ENCODE measurements at regions of chr10 and their contacts with region 1.

Region 1: GRCh38 chr10:72364239-72364777 is 9.6 kb upstream of the DNAJB12 start:
- DNase-seq: peak; percentile 59
- ATAC-seq: peak; percentile 100
- H3K4me3 ChIP-seq: no peak overlapping the region
- H3K27ac ChIP-seq: 0 out of 2 replicates have a peak overlapping the region, but pooled peaks have one; percentile 29
- H3K4me1 ChIP-seq: peaks cover 3% of the 10 kb centered on the region
- H3K27me3 ChIP-seq: no peaks in the 10 kb centered on the region
- CTCF ChIP-seq: peak; percentile 94 to 96 (median 94)
- EP300 ChIP-seq: no peak
- POLR2A ChIP-seq: peak; percentile 84
- RAD21 ChIP-seq: peak; percentile 99

Region 2: DNA sequence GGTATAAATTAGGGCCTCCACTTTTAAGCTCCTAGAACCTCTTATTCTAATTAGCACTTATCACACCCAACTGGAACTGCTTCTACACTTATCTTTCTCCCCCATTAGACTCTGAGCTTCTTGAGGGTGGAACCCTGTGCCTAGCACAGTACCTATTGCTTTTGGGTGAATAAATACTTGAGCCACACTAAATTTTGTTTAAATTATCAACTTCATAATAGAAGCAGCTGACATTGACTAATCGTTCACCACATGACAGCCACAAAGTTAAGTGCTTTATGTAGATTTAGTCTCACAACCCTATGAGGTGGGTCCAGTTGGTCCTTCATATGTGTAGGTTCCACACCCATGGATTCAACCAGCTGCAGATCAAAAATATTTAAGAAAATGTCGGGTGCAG is 26.5 kb after region 1 on chr10:
- CTCF ChIA-PET with region 1: no interaction called
- POLR2A ChIA-PET with region 1: no interaction called
- RAD21 ChIA-PET with region 1: no interaction called
- SMC1A ChIA-PET with region 1: no interaction called
- in situ Hi-C with region 1: no loop called
- intact Hi-C with region 1: no loop called
- DNase-seq: no peak
- ATAC-seq: no peak
- H3K4me3 ChIP-seq: no peak overlapping the region
- H3K27ac ChIP-seq: no peak overlapping the region
- H3K4me1 ChIP-seq: no peaks in the 10 kb centered on the region
- H3K27me3 ChIP-seq: no peaks in the 10 kb centered on the region
- CTCF ChIP-seq: no peak
- EP300 ChIP-seq: no peak
- POLR2A ChIP-seq: no peak
- RAD21 ChIP-seq: no peak

Region 3: GRCh38 chr10:72567884-72568640 is 203.8 kb after region 1 on chr10:
- CTCF ChIA-PET with region 1: interaction called, 34 read pairs
- POLR2A ChIA-PET with region 1: no interaction called
- RAD21 ChIA-PET with region 1: no interaction called
- SMC1A ChIA-PET with region 1: interaction called, 11 read pairs
- in situ Hi-C with region 1: loop called (anchors 5 kb)
- intact Hi-C with region 1: loop called (anchors 1 kb)
- DNase-seq: no peak
- ATAC-seq: peak; percentile 52; the same call in 2 of the 3 replicates
- H3K4me3 ChIP-seq: no peak overlapping the region
- H3K27ac ChIP-seq: no peak overlapping the region
- H3K4me1 ChIP-seq: peaks cover 4% of the 10 kb centered on the region; the same call in 1 of the 2 replicates
- H3K27me3 ChIP-seq: no peaks in the 10 kb centered on the region
- CTCF ChIP-seq: peak; percentile 41 to 57 (median 51)
- EP300 ChIP-seq: no peak
- POLR2A ChIP-seq: no peak
- RAD21 ChIP-seq: peak; percentile 63

Region 4: DNA sequence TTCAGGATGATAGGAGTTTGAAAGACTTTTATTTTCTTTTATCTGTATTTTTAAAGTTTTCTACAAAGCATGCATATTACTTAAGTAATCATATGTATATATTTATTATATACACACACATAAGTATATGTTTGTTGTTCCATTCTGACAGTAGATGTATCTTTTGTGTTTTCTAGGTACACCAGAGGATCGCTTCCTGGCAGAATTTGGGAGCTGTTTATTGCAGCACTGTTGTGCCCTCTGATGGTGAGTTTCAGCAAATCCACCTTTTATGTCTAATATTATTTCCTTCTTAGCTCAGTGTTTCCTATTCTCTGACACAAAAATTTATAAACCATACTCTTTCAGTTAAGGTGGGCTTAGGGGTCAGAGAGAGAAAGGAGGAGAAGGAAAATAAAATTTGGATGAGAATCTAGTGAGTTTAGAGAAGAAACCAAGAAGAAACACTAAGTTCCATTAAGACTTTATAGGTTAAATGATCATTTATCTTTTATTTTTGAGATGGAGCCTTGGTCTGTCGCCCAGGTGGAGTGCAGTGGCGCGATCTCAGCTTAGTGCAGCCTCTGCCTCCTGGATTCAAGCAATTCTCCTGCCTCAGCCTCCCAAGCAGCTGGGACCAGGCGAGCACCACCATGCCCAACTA is 470.0 kb after region 1 on chr10:
- CTCF ChIA-PET with region 1: interaction called, 72 read pairs
- POLR2A ChIA-PET with region 1: interaction called, 7 read pairs
- RAD21 ChIA-PET with region 1: interaction called, 32 read pairs
- SMC1A ChIA-PET with region 1: interaction called, 69 read pairs
- in situ Hi-C with region 1: loop called (anchors 5 kb)
- intact Hi-C with region 1: loop called (anchors 1 kb)
- DNase-seq: peak; percentile 28
- ATAC-seq: peak; percentile 66
- H3K4me3 ChIP-seq: no peak overlapping the region
- H3K27ac ChIP-seq: no peak overlapping the region
- H3K4me1 ChIP-seq: no peaks in the 10 kb centered on the region
- H3K27me3 ChIP-seq: no peaks in the 10 kb centered on the region
- CTCF ChIP-seq: peak; percentile 40 to 73 (median 56); a peak in 5 of 6 replicates
- EP300 ChIP-seq: no peak
- POLR2A ChIP-seq: no peak
- RAD21 ChIP-seq: peak; percentile 86

Region 5: GRCh38 chr10:73060738-73061635 is 696.7 kb after region 1 on chr10:
- CTCF ChIA-PET with region 1: interaction called, 8 read pairs
- POLR2A ChIA-PET with region 1: no interaction called
- RAD21 ChIA-PET with region 1: no interaction called
- SMC1A ChIA-PET with region 1: no interaction called
- in situ Hi-C with region 1: loop called (anchors 5 kb)
- intact Hi-C with region 1: loop called (anchors 2 kb)
- DNase-seq: no peak
- ATAC-seq: peak; percentile 87
- H3K4me3 ChIP-seq: no peak overlapping the region
- H3K27ac ChIP-seq: no peak overlapping the region
- H3K4me1 ChIP-seq: peaks cover 2% of the 10 kb centered on the region; the same call in 1 of the 2 replicates
- H3K27me3 ChIP-seq: no peaks in the 10 kb centered on the region
- CTCF ChIP-seq: peak; percentile 27 to 53 (median 49); a peak in 5 of 6 replicates
- EP300 ChIP-seq: no peak
- POLR2A ChIP-seq: no peak
- RAD21 ChIP-seq: no peak; the same call in 1 of the 2 replicates